ENCODE measurements at regions of chr3 and their contacts with region 1.

Region 1: DNA sequence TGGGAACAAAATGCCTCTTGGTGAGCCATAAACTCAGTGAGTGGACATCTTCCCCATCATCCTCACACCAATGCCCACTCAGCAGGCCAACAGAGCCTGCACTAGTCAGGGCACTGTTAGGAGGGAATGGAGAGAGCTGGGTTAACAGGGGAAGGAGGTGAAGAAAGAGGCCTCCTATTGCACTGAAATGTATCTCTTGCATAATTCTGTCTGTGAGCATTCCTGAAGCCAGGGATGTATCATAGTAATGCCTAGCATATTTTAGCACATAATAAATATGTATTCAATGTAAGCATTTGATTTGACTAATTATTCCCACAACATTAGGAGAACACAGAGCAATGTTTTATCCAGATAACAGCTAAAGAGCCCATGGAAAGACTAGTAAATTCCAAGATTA is 81.2 kb downstream of the ANO10 start:
- DNase-seq: no peak
- H3K4me3 ChIP-seq: no peak overlapping the region
- H3K27ac ChIP-seq: no peak overlapping the region
- H3K4me1 ChIP-seq: no peaks in the 10 kb centered on the region
- CTCF ChIP-seq: no peak

Region 2: DNA sequence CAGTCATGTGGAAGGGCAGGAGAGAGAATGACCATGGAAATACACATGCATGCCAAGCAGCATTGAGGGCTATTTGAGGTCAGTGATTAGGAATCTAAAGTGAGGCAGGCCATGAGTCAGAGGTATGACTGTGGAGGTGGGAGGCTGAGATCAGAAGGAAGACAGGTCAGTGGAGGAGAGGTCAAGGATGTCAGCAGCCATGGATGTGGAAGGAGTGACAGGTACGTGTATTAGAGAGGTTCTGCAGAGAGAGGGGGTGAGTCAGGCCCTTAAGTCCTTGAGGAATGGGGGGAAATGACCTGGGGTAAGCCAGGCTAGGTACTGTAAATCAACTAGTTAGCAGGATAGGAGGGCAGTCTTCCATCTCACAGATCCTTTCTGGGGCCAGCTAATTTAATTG is 85.4 kb before region 1 on chr3:
- CTCF ChIA-PET with region 1: no interaction called
- POLR2A ChIA-PET with region 1: no interaction called
- intact Hi-C with region 1: no loop called
- DNase-seq: no peak
- H3K4me3 ChIP-seq: no peak overlapping the region
- H3K27ac ChIP-seq: no peak overlapping the region
- H3K4me1 ChIP-seq: no peaks in the 10 kb centered on the region
- CTCF ChIP-seq: no peak

Region 3: DNA sequence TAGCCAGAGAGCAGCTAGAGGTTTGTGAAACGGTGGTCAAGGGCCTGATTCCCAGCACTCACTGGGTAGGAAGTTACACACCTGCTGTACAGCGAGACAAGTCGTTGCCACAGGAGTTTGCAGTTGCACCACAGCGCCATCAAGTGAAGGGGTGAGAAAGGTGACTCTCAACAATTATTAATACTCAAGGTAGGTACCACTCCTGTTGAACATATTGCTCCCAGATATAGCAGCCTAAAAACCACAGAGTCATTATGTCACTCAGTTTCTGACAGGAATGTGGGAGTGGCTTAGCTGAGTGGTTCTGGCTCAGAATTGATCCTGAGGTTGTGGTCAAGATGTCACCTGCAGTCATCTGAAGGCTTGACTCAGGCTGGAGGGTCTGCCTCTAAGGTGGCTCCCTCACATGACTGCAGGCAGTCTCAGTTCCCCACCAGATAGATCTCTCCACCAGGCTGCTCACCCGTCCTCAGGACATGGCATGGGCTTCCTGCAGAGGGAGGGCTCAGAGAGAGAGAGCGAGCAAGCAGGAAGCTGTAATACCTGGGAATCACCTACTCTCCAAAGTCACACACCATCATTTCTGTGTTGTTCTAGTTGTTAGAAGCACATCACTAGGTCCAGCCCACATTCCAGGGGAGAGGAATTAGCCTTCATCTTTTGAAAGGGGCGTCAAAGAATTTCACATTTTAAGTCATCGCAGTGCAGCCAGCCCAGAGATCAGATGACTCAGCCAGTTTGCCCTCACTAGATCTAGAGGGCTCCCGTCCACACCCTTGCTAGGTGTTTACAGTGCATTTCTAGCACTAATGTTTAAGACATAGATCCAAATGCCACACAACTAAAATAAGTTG is 98.2 kb after region 1 on chr3:
- CTCF ChIA-PET with region 1: no interaction called
- POLR2A ChIA-PET with region 1: no interaction called
- intact Hi-C with region 1: loop called (anchors 1 kb)
- DNase-seq: peak; percentile 37
- H3K4me3 ChIP-seq: no peak overlapping the region
- H3K27ac ChIP-seq: no peak overlapping the region
- H3K4me1 ChIP-seq: no peaks in the 10 kb centered on the region
- CTCF ChIP-seq: peak; percentile 72

Region 4: DNA sequence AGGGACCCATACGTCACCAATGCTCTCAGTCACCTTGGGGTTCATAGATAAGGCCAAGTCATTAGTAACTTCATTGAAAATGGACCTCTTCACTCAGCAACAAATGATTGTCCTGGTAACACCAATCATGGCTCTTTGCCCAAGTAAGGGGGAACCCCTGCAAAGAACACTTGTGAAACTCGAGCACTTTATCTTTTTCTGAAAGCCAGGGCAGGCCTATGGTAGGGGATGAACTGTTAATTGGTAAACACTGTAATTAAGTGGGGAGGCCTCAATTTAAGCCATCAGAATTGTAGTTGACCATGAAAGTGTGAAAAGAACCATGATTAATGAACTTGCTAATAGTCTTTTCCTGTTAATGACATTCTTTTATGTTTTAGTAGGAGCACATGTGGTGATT is 223.4 kb after region 1 on chr3:
- CTCF ChIA-PET with region 1: no interaction called
- POLR2A ChIA-PET with region 1: no interaction called
- intact Hi-C with region 1: loop called (anchors 5 kb)
- DNase-seq: no peak
- H3K4me3 ChIP-seq: no peak overlapping the region
- H3K27ac ChIP-seq: no peak overlapping the region
- H3K4me1 ChIP-seq: no peaks in the 10 kb centered on the region
- CTCF ChIP-seq: no peak

Region 5: DNA sequence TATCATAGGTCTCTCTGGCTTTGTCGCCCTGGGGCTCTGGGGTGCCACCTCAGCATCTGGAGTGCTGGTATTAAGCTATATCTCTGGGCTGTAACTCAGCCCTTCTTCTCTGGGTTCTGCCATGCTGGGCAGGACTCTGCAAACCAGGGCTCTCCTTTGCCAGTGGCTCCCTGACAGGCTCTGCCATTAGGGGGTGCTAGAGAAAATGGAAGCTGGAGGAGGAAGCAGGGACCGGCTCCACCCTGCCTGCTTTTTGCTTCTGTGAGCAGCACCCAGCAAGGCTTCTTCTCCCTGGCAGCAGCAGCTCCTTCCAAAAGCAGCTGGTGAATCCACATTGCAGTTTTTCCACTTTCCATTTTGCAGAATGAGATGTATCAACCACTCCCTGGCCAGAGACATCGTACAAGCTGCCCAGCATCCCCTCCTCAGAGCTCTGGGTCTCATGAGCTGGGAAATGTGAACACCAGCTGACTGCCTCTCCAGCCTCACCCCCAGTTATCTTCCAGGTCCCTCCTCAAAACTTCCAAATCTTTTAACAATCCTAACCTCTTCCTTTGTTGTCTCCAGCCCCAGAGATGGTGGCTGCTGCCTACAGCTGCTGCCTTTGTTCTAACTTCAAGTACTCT is 315.2 kb after region 1 on chr3:
- CTCF ChIA-PET with region 1: no interaction called
- POLR2A ChIA-PET with region 1: no interaction called
- intact Hi-C with region 1: loop called (anchors 10 kb)
- DNase-seq: peak; percentile 80
- H3K4me3 ChIP-seq: no peak overlapping the region
- H3K27ac ChIP-seq: no peak overlapping the region
- H3K4me1 ChIP-seq: peaks cover 4% of the 10 kb centered on the region
- CTCF ChIP-seq: peak; percentile 91

Region 6: GRCh38 chr3:43979645-43980044 is 439.0 kb after region 1 on chr3:
- CTCF ChIA-PET with region 1: no interaction called
- POLR2A ChIA-PET with region 1: no interaction called
- intact Hi-C with region 1: loop called (anchors 10 kb)
- DNase-seq: no peak
- H3K4me3 ChIP-seq: no peak overlapping the region
- H3K27ac ChIP-seq: no peak overlapping the region
- H3K4me1 ChIP-seq: no peaks in the 10 kb centered on the region
- CTCF ChIP-seq: no peak

Measured in OCI-LY7 (cell line).